ENCODE measurements at regions of chr17 and their contacts with region 1.

Region 1: GRCh38 chr17:78442648-78443128 is 64.2 kb downstream of the PGS1 start:
- DNase-seq: no peak
- H3K4me3 ChIP-seq: no peak overlapping the region
- H3K27ac ChIP-seq: no peak overlapping the region
- H3K4me1 ChIP-seq: no peaks in the 10 kb centered on the region
- H3K27me3 ChIP-seq: no peaks in the 10 kb centered on the region
- CTCF ChIP-seq: no peak

Region 2: GRCh38 chr17:78467049-78467715 is 24.5 kb after region 1 on chr17:
- CTCF ChIA-PET with region 1: interaction called, 14 read pairs
- POLR2A ChIA-PET with region 1: no interaction called
- intact Hi-C with region 1: no loop called
- DNase-seq: no peak
- H3K4me3 ChIP-seq: no peak overlapping the region
- H3K27ac ChIP-seq: no peak overlapping the region
- H3K4me1 ChIP-seq: no peaks in the 10 kb centered on the region
- H3K27me3 ChIP-seq: no peaks in the 10 kb centered on the region
- CTCF ChIP-seq: no peak

Region 3: DNA sequence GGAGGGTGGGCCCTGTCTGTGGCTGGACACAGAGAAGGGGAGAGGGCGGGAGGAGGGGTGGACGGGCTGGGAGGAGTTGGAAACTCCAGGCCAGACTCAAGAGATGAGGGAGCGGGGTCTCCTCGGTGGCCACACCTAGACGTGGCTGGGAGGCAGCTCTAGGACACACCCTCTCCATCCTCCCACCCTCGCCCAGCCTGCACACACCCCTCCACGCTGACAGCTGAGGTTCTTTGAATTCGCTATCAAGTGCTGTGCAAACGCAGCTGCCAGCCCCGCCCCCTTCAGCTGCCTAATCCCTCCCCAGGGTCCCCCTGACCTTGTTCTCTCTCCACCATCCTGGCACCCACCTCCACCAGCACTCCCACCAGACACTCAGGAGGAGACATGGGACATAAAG is 85.9 kb after region 1 on chr17:
- CTCF ChIA-PET with region 1: no interaction called
- POLR2A ChIA-PET with region 1: no interaction called
- intact Hi-C with region 1: no loop called
- DNase-seq: no peak
- H3K4me3 ChIP-seq: no peak overlapping the region
- H3K27ac ChIP-seq: no peak overlapping the region
- H3K4me1 ChIP-seq: no peaks in the 10 kb centered on the region
- H3K27me3 ChIP-seq: no peaks in the 10 kb centered on the region
- CTCF ChIP-seq: no peak

Measured in A673 (cell line).